H1 (cell line): ENCODE measurements at regions of chr17 and their contacts with region 1.

Region 1: GRCh38 chr17:8222630-8223356 is 12.4 kb upstream of the AURKB start:
- DNase-seq: peak; percentile 83 to 98
- H3K4me3 ChIP-seq: peak overlapping the region; percentile 67 to 97 (median 88)
- H3K27ac ChIP-seq: peak overlapping the region; percentile 84; the same call in 1 of the 2 replicates
- H3K4me1 ChIP-seq: peaks cover 0 to 15% (median 2%) of the 10 kb centered on the region in 4 experiments; a peak in 4 of 7 replicates
- H3K27me3 ChIP-seq: no peaks in the 10 kb centered on the region
- CTCF ChIP-seq: no peak
- EP300 ChIP-seq: no peak
- POLR2A ChIP-seq: peak in 1 of 2 experiments; percentile 16; a peak in 1 of 3 replicates
- RAD21 ChIP-seq: no peak

Region 2: DNA sequence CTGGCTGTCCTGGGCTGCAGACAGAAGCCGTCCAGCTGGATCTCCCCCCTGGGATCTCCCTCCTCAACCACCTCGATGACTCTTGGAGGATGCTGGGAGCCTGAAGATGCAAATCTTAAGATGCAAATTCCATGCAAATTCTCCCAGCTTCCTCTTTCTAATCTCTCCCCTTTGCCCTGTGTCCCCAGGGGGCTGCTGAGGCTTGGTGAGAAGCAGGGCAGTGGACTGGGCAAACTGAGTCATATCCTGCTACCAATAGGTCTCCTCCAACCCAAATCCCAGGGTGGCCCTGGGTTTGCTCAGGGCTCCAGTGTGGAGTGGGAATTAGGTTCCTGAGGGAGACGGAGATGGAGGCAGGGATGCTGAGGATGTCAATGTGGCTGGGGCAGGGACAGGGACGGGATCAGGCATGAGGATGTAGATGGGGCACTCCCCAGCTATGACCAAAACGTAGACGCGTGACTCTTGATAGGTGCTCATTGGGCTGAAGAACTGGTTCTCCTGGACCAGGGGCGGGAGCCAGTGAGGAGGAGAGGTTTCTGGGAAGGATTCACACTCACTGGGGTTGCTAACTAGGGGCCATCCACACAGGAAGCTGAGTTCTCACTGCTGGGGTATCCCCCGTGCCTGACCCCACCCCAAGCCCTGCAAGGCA is 131.6 kb before region 1 on chr17:
- CTCF ChIA-PET with region 1: no interaction called
- POLR2A ChIA-PET with region 1: no interaction called
- DNase-seq: no peak
- H3K4me3 ChIP-seq: no peak overlapping the region
- H3K27ac ChIP-seq: no peak overlapping the region
- H3K4me1 ChIP-seq: peaks cover 0 to 7% (median under 1%) of the 10 kb centered on the region in 4 experiments; a peak in 5 of 7 replicates
- H3K27me3 ChIP-seq: peaks cover 0 to 10% (median 4%) of the 10 kb centered on the region in 4 experiments; a peak in 4 of 7 replicates
- CTCF ChIP-seq: no peak
- EP300 ChIP-seq: no peak
- POLR2A ChIP-seq: no peak
- RAD21 ChIP-seq: no peak

Region 3: GRCh38 chr17:8131844-8132441 is 90.8 kb before region 1 on chr17:
- CTCF ChIA-PET with region 1: interaction called, 3 read pairs
- POLR2A ChIA-PET with region 1: interaction called, 13 read pairs
- DNase-seq: no peak
- H3K4me3 ChIP-seq: no peak overlapping the region
- H3K27ac ChIP-seq: no peak overlapping the region
- H3K4me1 ChIP-seq: peaks cover 0 to 14% (median 8%) of the 10 kb centered on the region in 4 experiments; a peak in 6 of 7 replicates
- H3K27me3 ChIP-seq: peaks cover 0 to 17% (median 14%) of the 10 kb centered on the region in 4 experiments; a peak in 6 of 7 replicates
- CTCF ChIP-seq: no peak
- EP300 ChIP-seq: no peak
- POLR2A ChIP-seq: no peak
- RAD21 ChIP-seq: no peak

Region 4: GRCh38 chr17:8162233-8162996 is 60.4 kb before region 1 on chr17 and contains the start of gene VAMP2:
- CTCF ChIA-PET with region 1: interaction called, 3 read pairs
- POLR2A ChIA-PET with region 1: interaction called, 10 read pairs
- DNase-seq: no peak
- H3K4me3 ChIP-seq: peak within 1 kb of the TSS; percentile 88 to 98 (median 93)
- H3K27ac ChIP-seq: peak within 1 kb of the TSS; percentile 99
- H3K4me1 ChIP-seq: peaks cover 4 to 25% (median 21%) of the 10 kb centered on the region in 4 experiments
- H3K27me3 ChIP-seq: no peaks in the 10 kb centered on the region
- CTCF ChIP-seq: no peak
- EP300 ChIP-seq: 0 out of 3 replicates have a peak, but pooled peaks of 1 of the 2 experiments have one; percentile 40
- POLR2A ChIP-seq: peak; percentile 18 to 70; a peak in 2 of 3 replicates
- RAD21 ChIP-seq: no peak
- total RNA-seq, gene VAMP2: 19.0 and 20.5 TPM in 2 replicates

Region 5: DNA sequence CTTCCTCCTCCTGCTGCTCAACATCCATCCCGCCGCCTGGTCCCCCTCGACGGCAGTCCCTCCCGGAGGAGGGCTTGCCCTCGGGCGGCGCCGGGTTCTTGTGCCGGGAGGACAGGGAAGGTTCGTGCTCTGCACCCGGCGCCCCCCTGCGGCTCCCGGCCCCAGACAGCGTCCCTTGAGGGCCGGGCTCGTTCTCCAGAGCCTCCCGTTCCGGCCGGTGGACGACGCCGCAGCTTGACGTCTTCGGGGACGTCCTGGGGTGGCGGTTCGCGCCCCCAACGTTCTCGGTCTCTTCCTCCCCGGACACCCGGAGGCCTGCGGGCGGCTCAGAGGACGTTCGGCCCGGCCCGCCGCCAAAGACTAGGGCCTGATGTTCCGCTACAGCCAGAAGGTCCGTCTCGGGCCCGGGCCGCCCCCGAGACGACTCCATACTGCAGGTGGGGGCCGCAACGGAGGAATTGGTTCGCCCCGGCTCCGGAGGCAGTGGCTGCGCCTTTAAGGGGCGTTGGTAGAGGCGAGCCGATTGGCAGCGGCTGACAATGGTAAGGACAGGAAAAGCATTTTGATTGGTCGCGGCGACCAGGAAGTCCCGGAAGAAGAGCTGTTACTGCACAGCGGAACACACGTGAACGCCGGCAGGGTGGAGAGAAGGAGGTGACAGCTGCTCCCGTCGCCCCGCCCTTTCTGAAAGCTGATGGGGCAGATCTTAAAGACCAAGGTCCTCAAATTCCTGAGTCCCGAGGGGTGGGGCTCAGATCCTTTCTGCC is 32.9 kb before region 1 on chr17 and contains the start of gene BORCS6:
- CTCF ChIA-PET with region 1: interaction called, 26 read pairs
- POLR2A ChIA-PET with region 1: interaction called, 58 read pairs
- DNase-seq: peak; percentile 87
- H3K4me3 ChIP-seq: peak within 1 kb of the TSS; percentile 59 to 89 (median 78)
- H3K27ac ChIP-seq: no peak within 1 kb of the TSS
- H3K4me1 ChIP-seq: peaks cover 4 to 21% (median 10%) of the 10 kb centered on the region in 4 experiments; a peak in 6 of 7 replicates
- H3K27me3 ChIP-seq: peaks cover 2 to 17% (median 11%) of the 10 kb centered on the region in 4 experiments
- CTCF ChIP-seq: no peak
- EP300 ChIP-seq: no peak
- POLR2A ChIP-seq: no peak
- RAD21 ChIP-seq: no peak
- total RNA-seq, gene BORCS6: 3.6 and 4.6 TPM in 2 replicates

Region 6: DNA sequence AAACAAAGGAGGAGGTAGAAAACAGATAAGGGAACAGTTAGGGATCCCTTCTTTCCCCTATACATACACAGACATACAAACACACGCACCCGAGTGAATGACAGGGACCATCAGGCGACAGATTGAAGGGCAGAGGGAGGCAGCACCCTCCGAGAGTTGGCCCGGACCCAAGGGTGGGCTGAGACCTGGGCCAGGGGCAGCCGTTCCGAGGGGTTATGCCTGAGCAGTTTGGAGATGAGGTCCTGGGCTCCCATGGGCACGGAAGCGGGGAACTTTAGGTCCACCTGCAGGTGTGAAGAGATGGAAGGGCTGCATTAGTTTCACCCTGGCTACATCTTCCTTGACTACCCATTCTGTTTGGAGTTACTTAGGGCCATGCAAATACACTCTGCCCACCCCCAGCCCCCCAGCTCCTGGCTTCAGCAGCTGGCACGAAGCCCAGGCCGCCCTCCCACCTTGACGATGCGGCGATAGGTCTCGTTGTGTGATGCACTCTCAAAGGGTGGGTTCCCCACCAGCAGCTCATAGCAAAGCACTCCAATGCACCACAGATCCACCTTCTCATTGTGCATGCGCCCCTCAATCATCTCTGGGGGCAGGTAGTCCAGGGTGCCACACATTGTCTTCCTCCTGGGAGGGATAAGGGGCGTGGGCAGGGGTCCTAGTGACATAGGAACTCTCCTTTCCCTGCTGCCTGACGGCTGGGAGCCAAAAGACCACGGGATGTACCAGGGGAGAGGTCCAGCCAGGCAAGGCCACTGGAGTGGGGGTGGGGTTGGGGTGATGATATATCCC is 17.8 kb before region 1 on chr17:
- CTCF ChIA-PET with region 1: interaction called, 3 read pairs
- POLR2A ChIA-PET with region 1: interaction called, 187 read pairs
- DNase-seq: no peak
- H3K4me3 ChIP-seq: no peak overlapping the region
- H3K27ac ChIP-seq: no peak overlapping the region
- H3K4me1 ChIP-seq: peaks cover 0 to 4% (median under 1%) of the 10 kb centered on the region in 4 experiments; a peak in 2 of 7 replicates
- H3K27me3 ChIP-seq: no peaks in the 10 kb centered on the region
- CTCF ChIP-seq: no peak
- EP300 ChIP-seq: no peak
- POLR2A ChIP-seq: peak in 1 of 2 experiments; percentile 53; a peak in 1 of 3 replicates
- RAD21 ChIP-seq: no peak

Region 7: GRCh38 chr17:8209909-8210760 is 12.7 kb before region 1 on chr17 and contains the start of gene AURKB:
- CTCF ChIA-PET with region 1: interaction called, 11 read pairs
- POLR2A ChIA-PET with region 1: interaction called, 187 read pairs
- DNase-seq: peak in 1 of 2 experiments; percentile 97
- H3K4me3 ChIP-seq: peak within 1 kb of the TSS; percentile 67 to 93 (median 80)
- H3K27ac ChIP-seq: peak within 1 kb of the TSS; percentile 92; the same call in 1 of the 2 replicates
- H3K4me1 ChIP-seq: peaks cover 0 to 4% (median under 1%) of the 10 kb centered on the region in 4 experiments; a peak in 2 of 7 replicates
- H3K27me3 ChIP-seq: no peaks in the 10 kb centered on the region
- CTCF ChIP-seq: no peak; a peak in 1 of 4 replicates
- EP300 ChIP-seq: no peak
- POLR2A ChIP-seq: peak; percentile 90 to 98
- RAD21 ChIP-seq: no peak
- total RNA-seq, gene AURKB: 154 and 160 TPM in 2 replicates

Region 8: DNA sequence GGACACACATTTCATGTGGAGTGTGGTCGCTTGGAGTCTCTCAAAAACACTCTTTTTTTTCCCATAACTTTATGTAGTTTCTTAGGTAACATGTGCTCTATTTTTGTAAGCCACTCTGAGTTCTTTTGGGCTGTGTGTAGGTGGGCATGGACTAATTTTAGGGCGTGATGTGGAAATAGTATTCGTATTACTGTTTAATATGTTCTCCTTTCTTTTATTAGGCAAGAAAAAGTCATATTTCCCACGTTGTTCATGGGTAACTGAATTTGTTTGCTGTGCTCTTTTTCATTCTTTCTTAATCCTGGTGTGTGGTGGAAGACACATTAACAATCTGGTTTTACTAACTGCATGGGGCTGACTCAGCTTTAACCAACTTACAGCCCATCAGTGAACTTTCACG is 240.3 kb after region 1 on chr17:
- CTCF ChIA-PET with region 1: no interaction called
- POLR2A ChIA-PET with region 1: no interaction called
- DNase-seq: no peak
- H3K4me3 ChIP-seq: no peak overlapping the region
- H3K27ac ChIP-seq: no peak overlapping the region
- H3K4me1 ChIP-seq: peaks cover 0 to 6% (median 0%) of the 10 kb centered on the region in 4 experiments; a peak in 1 of 7 replicates
- H3K27me3 ChIP-seq: no peaks in the 10 kb centered on the region
- CTCF ChIP-seq: no peak
- EP300 ChIP-seq: no peak
- POLR2A ChIP-seq: no peak
- RAD21 ChIP-seq: no peak